ENCODE measurements at regions of chr12 and their contacts with region 1.

Region 1: GRCh38 chr12:119673634-119674033 is 5.7 kb downstream of the PRKAB1 start:
- DNase-seq: no peak

Region 2: GRCh38 chr12:119642986-119643385 is 30.6 kb before region 1 on chr12:
- intact Hi-C with region 1: no loop called
- DNase-seq: no peak

Region 3: DNA sequence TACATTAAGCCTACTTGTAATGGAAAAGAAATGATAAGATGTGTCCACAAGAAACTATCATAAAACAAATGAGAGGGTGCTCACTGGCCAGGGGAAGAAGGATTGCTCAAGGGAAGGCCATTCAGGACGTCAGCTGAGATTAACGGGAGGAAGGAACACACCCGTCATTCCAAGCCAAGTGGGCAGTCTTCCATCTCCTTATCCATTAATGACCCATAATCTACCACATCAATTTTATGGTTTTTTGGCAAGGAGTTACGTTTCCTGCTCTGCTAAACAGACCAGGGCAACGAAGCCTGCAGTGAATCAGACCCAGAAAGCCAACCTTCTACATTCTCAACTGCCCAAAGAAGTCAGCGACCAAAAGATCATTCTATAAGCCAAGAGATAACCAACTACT is 19.4 kb after region 1 on chr12:
- intact Hi-C with region 1: loop called (anchors 2 kb)
- DNase-seq: no peak

Region 4: DNA sequence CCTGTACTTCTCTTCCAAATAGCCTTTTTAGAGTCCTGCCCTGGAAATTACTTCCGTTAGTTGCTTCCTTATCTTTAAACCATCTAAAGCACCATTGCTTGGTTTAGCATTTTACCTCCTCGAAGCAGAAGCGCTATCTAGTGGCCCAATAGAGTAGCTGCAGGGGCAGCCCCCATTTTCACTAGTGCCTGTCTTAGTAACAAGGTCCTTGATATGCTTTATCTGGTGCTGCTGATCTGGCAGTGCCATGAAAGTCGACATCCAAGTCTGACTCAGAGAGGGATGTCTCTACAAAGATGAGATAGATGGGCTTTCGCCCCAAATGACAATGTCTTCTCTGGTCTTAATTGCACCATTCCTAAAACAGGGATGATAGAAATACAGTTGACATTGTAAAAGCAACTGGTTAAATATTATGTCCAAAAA is 228.5 kb after region 1 on chr12:
- intact Hi-C with region 1: no loop called
- DNase-seq: no peak